Heart left ventricle (tissue), 16 donors: ENCODE measurements at regions of chr2 and their contacts with region 1.

Region 1: DNA sequence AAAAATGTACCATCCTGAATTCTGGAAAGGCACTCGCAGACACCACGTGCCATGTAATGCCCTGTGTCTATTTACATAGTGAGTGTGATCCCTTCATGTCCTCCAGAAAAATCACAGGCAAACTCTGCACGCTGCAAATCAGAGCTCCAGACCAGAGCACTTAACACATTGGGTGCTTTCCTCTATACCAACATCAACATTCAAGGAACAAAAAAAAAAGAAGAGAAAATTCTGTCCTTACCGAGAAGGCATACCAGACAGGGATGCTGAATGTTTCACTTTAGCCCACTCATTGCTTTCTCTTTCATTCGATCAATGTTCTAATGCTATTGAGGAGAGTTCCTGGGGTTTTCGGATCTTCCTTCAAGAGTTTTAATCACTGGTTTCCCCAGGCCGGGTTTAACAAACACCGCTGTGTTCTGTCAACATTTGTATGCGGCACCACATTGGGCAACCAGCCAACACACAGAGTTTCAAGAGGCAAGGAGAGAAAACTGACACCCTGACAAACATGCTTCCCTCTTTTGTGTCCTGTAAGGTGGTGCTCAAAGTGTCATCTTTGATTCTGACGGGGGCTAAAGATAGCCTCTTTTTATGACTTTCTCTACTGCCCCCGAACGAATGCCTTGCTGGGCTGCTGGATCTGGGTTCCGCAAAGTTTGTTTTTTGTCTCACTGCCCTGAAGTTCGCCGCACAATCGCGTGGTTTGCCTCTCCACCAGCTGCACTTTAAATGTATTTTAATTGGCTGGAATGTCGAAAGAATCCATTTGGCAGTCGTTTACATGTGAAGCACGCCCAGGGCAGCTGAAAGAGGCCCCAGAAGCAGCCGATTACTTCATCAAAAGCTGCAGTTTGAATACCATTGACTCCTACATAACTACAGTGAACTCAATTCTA is 106.4 kb upstream of the NCKAP5 start:
- DNase-seq: peak in 4 of 5 donors; percentile 33 to 70 (median 42)
- ATAC-seq: peak; percentile 47 to 75 (median 60)
- H3K4me3 ChIP-seq: peak overlapping the region in 11 of 12 donors; percentile 1 to 54 (median 36)
- H3K27ac ChIP-seq: peak overlapping the region; percentile 10 to 89 (median 74)
- H3K4me1 ChIP-seq: peaks cover 0 to 43% (median 20%) of the 10 kb centered on the region in 12 donors
- H3K27me3 ChIP-seq: no peaks in the 10 kb centered on the region
- CTCF ChIP-seq: no peak
- POLR2A ChIP-seq: no peak

Region 2: GRCh38 chr2:133561045-133561852 is 113.4 kb before region 1 on chr2:
- intact Hi-C with region 1: loop called in 3 of 10 experiments (anchors 5 to 10 kb)
- DNase-seq: no peak
- ATAC-seq: peak in 2 of 4 donors; percentile 58 to 62
- H3K4me3 ChIP-seq: no peak overlapping the region
- H3K27ac ChIP-seq: no peak overlapping the region
- H3K4me1 ChIP-seq: peaks cover 0 to 9% (median 2%) of the 10 kb centered on the region in 12 donors
- H3K27me3 ChIP-seq: no peaks in the 10 kb centered on the region
- CTCF ChIP-seq: peak; percentile 23 to 72 (median 62)
- POLR2A ChIP-seq: no peak

Region 3: GRCh38 chr2:133568172-133568571 is 106.5 kb before region 1 on chr2 and contains the start of gene NCKAP5:
- intact Hi-C with region 1: loop called in 3 of 10 experiments (anchors 5 to 10 kb)
- DNase-seq: peak in 2 of 5 donors; percentile 10 to 36
- ATAC-seq: peak; percentile 28 to 38 (median 30)
- H3K4me3 ChIP-seq: peak within 1 kb of the TSS in 11 of 12 donors; percentile 1 to 58 (median 44)
- H3K27ac ChIP-seq: peak within 1 kb of the TSS in 11 of 12 donors; percentile 36 to 73 (median 58)
- H3K4me1 ChIP-seq: peaks cover 0 to 25% (median 7%) of the 10 kb centered on the region in 12 donors
- H3K27me3 ChIP-seq: no peaks in the 10 kb centered on the region
- CTCF ChIP-seq: peak in 4 of 12 donors; percentile 11 to 24 (median 14)
- POLR2A ChIP-seq: no peak
- total RNA-seq, gene NCKAP5: 1.8 to 10.5 (median 6.3) TPM

Region 4: GRCh38 chr2:133765658-133766057 is 91.0 kb after region 1 on chr2:
- intact Hi-C with region 1: loop called in 2 of 10 experiments (anchors 5 kb)
- DNase-seq: peak in 4 of 5 donors; percentile 39 to 58 (median 46)
- ATAC-seq: peak; percentile 84 to 97 (median 96)
- H3K4me3 ChIP-seq: no peak overlapping the region
- H3K27ac ChIP-seq: peak overlapping the region in 11 of 12 donors; percentile 20 to 80 (median 68)
- H3K4me1 ChIP-seq: peaks cover 0 to 31% (median 11%) of the 10 kb centered on the region in 12 donors
- H3K27me3 ChIP-seq: no peaks in the 10 kb centered on the region
- CTCF ChIP-seq: no peak
- POLR2A ChIP-seq: no peak

Region 5: DNA sequence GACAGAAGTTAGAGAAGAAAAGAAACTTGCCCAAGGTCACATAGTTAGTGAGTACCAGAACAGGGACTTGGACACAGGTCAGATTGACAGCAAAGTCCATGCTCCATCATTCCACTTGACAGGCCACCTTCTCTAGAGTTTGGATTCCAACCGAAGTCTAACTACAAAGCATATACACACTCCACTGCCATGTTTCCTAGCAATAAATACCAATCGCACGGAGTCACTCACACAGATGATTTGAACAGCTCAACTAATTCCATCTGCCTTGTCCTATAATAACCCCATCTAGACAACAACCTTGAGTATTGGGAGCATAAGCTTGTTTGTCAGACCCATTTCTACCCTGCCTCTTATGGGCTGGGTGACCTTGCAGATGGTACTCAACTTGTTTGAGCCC is 244.6 kb after region 1 on chr2:
- intact Hi-C with region 1: no loop called
- DNase-seq: no peak
- ATAC-seq: no peak
- H3K4me3 ChIP-seq: no peak overlapping the region
- H3K27ac ChIP-seq: no peak overlapping the region
- H3K4me1 ChIP-seq: no peaks in the 10 kb centered on the region
- H3K27me3 ChIP-seq: peaks cover 0 to 3% (median 0%) of the 10 kb centered on the region in 9 donors
- CTCF ChIP-seq: no peak
- POLR2A ChIP-seq: no peak